ENCODE measurements at regions of chr1 and their contacts with region 1.

Region 1: DNA sequence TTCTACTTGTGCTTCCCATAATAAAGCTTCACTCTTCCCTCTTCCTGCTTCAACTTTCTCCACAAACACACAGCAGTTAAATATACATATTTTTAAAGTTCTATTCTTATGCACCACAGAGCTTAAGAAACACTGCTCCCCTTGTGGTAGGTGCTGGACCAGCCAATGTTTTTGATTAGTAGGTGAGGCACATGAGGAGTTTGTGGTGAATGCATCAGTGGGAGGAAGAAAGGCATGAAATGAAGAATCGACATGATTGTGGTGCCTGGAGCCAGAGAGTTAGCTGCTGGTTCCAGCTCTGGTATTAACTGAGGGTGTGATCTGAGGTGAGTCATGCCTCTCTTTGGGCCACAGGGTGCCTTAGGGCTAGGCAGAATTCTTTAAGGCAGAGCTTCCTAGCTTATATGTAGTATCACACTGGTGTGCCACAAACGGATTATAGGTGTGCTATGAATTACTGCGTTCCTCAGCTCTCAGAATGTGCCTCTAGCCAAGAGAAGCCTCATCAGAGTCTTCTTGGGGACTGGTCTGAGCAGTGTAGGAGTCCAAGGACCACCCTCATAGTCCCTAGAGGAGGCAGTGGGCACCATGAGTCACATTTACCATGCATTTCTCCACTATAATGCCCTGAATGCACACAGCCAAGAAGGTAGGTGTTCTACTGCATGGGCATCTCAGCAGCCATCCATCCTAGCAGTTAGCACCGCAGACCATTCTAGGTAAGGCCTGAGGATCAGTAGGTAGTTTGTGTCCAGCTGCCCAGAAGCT is 97.4 kb upstream of the SGIP1 start:
- DNase-seq: peak; percentile 65
- H3K4me3 ChIP-seq: no peak overlapping the region
- CTCF ChIP-seq: peak; percentile 57

Region 2: GRCh38 chr1:65958561-65959350 is 477.8 kb before region 1 on chr1:
- CTCF ChIA-PET with region 1: interaction called, 11 read pairs
- POLR2A ChIA-PET with region 1: no interaction called
- DNase-seq: no peak
- H3K4me3 ChIP-seq: no peak overlapping the region
- CTCF ChIP-seq: peak; percentile 23

Region 3: GRCh38 chr1:66253330-66253921 is 183.1 kb before region 1 on chr1:
- CTCF ChIA-PET with region 1: interaction called, 807 read pairs
- POLR2A ChIA-PET with region 1: interaction called, 3 read pairs
- DNase-seq: no peak
- H3K4me3 ChIP-seq: no peak overlapping the region
- CTCF ChIP-seq: peak; percentile 54

Region 4: GRCh38 chr1:66262211-66262963 is 174.2 kb before region 1 on chr1:
- CTCF ChIA-PET with region 1: interaction called, 807 read pairs
- POLR2A ChIA-PET with region 1: no interaction called
- DNase-seq: peak; percentile 83
- H3K4me3 ChIP-seq: no peak overlapping the region
- CTCF ChIP-seq: no peak

Region 5: GRCh38 chr1:66374561-66375111 is 61.9 kb before region 1 on chr1:
- CTCF ChIA-PET with region 1: interaction called, 12 read pairs
- POLR2A ChIA-PET with region 1: no interaction called
- DNase-seq: peak; percentile 44
- H3K4me3 ChIP-seq: no peak overlapping the region
- CTCF ChIP-seq: no peak

Region 6: DNA sequence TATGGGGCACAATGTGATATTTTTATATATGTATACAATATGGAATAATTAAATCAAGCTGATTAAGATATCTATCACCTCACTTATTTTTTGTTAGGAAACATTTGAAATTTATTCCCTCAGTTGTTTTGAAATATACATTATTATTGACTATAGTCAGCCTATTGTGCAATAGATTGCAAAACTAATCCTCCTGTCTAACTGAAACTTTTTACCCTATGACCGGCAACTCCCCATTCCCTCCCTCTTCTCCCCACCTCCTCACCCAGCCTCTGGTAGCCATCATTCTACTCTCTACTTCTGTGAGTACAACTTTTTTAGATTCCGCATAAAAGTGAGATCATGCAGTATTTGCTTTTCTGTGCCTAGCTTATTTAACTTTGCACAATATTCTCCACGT is 20.3 kb before region 1 on chr1:
- CTCF ChIA-PET with region 1: no interaction called
- POLR2A ChIA-PET with region 1: no interaction called
- DNase-seq: no peak
- H3K4me3 ChIP-seq: no peak overlapping the region
- CTCF ChIP-seq: no peak

Region 7: GRCh38 chr1:66426239-66426853 is 10.2 kb before region 1 on chr1:
- CTCF ChIA-PET with region 1: interaction called, 10 read pairs
- POLR2A ChIA-PET with region 1: no interaction called
- DNase-seq: no peak
- H3K4me3 ChIP-seq: no peak overlapping the region
- CTCF ChIP-seq: no peak

Region 8: GRCh38 chr1:66676613-66677298 is 240.2 kb after region 1 on chr1:
- CTCF ChIA-PET with region 1: no interaction called
- POLR2A ChIA-PET with region 1: no interaction called
- DNase-seq: peak; percentile 92
- H3K4me3 ChIP-seq: no peak overlapping the region
- CTCF ChIP-seq: no peak

Measured in AG04449 (cell line).